ENCODE measurements at regions of chr14 and their contacts with region 1.

Region 1: DNA sequence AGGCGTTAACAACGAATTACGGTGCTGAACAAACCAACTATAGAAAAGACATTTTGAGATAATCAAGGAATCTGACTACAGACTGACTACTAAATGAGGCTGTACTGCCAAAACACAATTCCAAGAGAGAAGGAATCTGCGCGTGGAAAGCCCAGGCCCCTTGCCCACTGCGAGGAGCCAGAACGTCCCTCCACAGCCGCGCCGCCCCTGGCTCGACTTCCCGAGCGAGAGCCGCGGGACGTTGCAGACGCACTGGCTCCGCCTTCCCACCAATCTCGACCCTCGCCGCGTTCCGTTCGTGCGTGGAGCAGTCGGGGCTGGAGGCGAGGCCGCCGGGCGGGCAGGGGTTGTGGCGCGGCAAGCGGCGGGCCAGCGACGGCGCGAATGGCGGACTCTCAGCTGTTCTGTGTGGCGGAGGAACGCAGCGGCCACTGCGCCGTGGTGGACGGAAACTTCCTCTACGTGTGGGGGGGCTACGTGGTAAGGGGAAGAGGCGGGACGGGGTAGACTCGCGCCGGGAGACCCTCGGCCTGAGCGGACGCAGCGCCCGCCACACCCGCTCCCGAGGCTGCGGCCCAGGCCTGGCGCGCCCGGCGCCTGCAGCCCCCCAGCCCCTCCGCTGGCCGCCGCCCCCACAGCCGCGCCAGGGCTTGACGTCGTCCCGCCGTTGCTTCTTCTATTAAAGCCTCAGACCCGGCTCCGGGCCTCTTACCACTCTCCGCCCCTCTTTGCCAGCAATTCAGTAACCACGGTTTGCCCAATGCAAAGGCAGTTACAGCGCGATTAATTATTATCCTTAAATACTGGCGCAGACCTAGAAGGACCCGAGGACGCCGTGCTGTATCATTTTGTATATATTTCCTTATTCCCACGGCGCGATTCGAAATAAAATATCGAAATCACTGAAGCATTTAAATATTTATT is at the start of gene KLHDC1:
- DNase-seq: peak; percentile 96
- ATAC-seq: peak; percentile 95
- total RNA-seq, gene KLHDC1: 7.1 TPM

Region 2: GRCh38 chr14:49767562-49768300 is 74.7 kb after region 1 on chr14 and contains the start of gene KLHDC2:
- intact Hi-C with region 1: loop called (anchors 2 kb)
- DNase-seq: peak; percentile 97
- ATAC-seq: peak; percentile 96
- total RNA-seq, gene KLHDC2: 84.4 TPM

Region 3: DNA sequence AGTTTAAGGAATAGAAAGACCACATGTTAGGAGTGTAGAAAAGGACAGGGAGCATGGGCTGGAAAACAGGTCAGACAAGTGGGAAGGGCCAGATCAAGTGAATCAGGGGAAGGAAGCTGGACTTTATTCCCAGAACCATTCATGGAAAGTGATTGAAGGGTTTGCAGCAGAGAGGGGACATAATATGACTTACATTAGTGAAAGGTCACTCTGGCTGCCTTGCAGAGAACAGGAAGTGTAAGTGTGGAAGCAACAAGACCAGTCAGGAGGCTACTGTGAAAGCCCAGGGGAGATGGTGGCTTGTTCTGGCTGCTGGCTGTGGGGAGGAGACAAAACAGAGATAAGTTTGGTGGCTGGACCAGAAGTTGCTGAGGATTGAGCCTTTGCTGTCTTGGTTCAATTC is 354.2 kb after region 1 on chr14:
- intact Hi-C with region 1: no loop called
- DNase-seq: no peak
- ATAC-seq: peak; percentile 40